ENCODE measurements at regions of chr14 and their contacts with region 1.

Region 1: DNA sequence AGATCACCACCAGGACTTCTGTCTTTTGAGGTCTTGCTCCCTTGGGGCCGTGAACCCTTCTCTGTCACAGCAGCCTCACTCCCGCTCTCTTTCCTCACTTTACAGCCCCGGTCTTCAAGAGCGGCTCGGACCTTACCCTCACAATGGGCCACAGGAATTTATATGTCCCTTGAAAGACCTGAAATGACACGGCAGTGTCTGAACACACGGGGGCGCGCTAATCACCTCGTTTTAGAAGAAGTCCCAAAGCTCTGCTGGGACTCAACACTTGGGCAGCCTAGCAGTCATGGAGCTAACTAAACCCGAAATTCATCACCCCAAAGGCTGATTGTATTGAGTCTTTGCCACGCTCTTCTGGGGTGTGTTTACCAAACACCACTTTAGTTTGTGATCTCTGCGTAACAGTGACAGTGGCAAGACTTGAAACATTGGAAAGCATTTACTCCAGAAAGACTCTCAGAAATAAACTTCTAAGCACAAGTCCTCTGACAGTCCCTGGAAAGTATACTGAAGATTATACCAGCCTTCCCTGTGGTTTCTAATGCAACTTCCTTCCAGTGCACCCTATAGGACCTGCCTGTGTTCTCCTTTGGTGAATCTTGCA is 29.0 kb downstream of the SERPINA11 start:
- DNase-seq: peak; percentile 19
- H3K4me3 Mint-ChIP-seq: no peak overlapping the region
- H3K27ac Mint-ChIP-seq: no peak overlapping the region
- H3K4me1 Mint-ChIP-seq: peaks cover 5% of the 10 kb centered on the region
- H3K27me3 Mint-ChIP-seq: peaks cover 18% of the 10 kb centered on the region

Region 2: GRCh38 chr14:94485944-94486841 is 62.6 kb after region 1 on chr14:
- intact Hi-C with region 1: loop called (anchors 1 kb)
- DNase-seq: peak; percentile 21
- H3K4me3 Mint-ChIP-seq: no peak overlapping the region
- H3K27ac Mint-ChIP-seq: no peak overlapping the region
- H3K4me1 Mint-ChIP-seq: no peaks in the 10 kb centered on the region
- H3K27me3 Mint-ChIP-seq: peaks cover 11% of the 10 kb centered on the region

Region 3: DNA sequence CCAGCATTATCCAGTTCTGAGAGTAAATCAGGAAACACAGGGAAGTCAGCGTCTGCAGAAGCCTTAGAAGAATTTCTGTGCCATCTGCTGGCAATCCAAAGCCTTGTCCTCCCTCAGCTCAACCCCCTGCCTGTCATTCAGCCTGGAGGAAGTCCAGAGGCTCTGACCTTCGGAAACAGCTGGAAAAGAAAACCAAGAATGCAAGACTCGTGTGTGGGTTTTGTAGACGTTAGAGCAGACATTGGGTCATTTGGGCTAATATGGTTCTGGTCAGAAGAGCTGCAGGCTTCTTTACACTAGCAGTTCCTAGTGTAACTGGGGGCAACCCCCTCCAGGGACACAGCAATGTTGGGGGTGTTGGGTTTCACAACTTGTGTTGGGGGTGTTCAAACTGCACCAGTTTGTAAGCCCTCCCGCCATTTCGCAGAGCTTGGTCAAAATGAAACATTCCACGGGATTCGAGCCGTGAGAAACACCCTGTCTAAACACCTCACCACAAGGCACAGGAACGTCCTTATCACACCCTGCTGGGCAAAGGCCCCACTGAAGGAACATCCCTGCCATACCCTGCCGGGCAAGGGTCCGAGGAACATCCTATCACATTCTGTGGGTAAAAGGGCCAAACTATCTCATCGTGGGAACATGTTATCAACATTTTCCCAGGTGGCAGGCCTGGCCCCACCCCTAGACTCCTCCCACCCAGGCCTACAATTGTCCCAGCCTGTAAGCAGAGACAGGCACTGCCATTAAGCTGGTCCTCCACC is 116.7 kb after region 1 on chr14:
- intact Hi-C with region 1: no loop called
- DNase-seq: no peak
- H3K4me3 Mint-ChIP-seq: no peak overlapping the region
- H3K27ac Mint-ChIP-seq: no peak overlapping the region
- H3K4me1 Mint-ChIP-seq: no peaks in the 10 kb centered on the region
- H3K27me3 Mint-ChIP-seq: peaks cover 4% of the 10 kb centered on the region